Panc1 (cell line): ENCODE measurements at regions of chr5 and their contacts with region 1.

Region 1: DNA sequence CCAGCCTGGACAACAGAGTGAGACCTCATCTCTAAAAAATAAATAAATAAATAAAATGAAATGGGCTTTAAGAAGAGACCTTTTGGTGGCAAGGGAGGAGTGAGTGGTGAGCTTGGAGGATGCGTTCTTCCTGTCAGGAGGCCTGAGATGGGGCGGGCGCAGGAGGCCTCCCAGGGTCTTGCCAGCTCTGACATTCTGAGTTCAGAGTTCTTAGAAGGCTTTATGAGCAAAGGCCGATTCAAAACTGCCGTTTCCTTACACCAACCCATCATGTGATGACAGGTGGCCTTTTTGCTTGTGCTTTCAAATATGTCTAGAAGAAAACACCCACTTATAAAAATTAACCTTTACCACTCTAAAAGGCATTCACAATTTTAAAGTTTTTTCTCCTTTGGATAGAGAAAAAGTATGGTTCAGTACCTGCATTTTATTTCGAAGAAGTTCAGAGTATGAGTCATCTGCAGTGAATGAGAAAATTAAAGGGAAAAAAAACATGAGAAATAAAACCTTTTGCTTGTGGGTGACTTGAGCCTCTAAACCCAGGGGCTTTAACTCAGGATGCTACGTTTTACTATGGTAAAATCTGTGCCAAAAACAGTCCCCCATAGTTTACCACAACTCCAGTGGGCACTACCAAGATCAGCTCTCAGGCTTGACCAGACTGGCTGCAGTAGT is 157.4 kb upstream of the OTULINL start:
- DNase-seq: no peak
- ATAC-seq: no peak
- H3K4me3 ChIP-seq: no peak overlapping the region
- H3K27ac ChIP-seq: no peak overlapping the region
- H3K4me1 ChIP-seq: no peaks in the 10 kb centered on the region
- H3K27me3 ChIP-seq: no peaks in the 10 kb centered on the region
- CTCF ChIP-seq: no peak

Region 2: GRCh38 chr5:14357851-14358250 is 66.3 kb before region 1 on chr5:
- CTCF ChIA-PET with region 1: no interaction called
- POLR2A ChIA-PET with region 1: no interaction called
- in situ Hi-C with region 1: no loop called
- intact Hi-C with region 1: no loop called
- DNase-seq: no peak
- ATAC-seq: no peak
- H3K4me3 ChIP-seq: no peak overlapping the region
- H3K27ac ChIP-seq: no peak overlapping the region
- H3K4me1 ChIP-seq: peaks cover 4% of the 10 kb centered on the region; the same call in 1 of the 2 replicates
- H3K27me3 ChIP-seq: no peaks in the 10 kb centered on the region
- CTCF ChIP-seq: no peak

Region 3: GRCh38 chr5:14405267-14405666 is 18.9 kb before region 1 on chr5:
- CTCF ChIA-PET with region 1: no interaction called
- POLR2A ChIA-PET with region 1: interaction called, 15 read pairs
- in situ Hi-C with region 1: no loop called
- intact Hi-C with region 1: no loop called
- DNase-seq: no peak
- ATAC-seq: peak; percentile 50
- H3K4me3 ChIP-seq: no peak overlapping the region
- H3K27ac ChIP-seq: no peak overlapping the region
- H3K4me1 ChIP-seq: no peaks in the 10 kb centered on the region
- H3K27me3 ChIP-seq: no peaks in the 10 kb centered on the region
- CTCF ChIP-seq: peak; percentile 73; the same call in 1 of the 2 replicates

Region 4: GRCh38 chr5:16120579-16120978 is 1696.4 kb after region 1 on chr5:
- CTCF ChIA-PET with region 1: no interaction called
- POLR2A ChIA-PET with region 1: no interaction called
- in situ Hi-C with region 1: no loop called
- intact Hi-C with region 1: no loop called
- DNase-seq: no peak
- ATAC-seq: no peak
- H3K4me3 ChIP-seq: no peak overlapping the region
- H3K27ac ChIP-seq: no peak overlapping the region
- H3K4me1 ChIP-seq: no peaks in the 10 kb centered on the region
- H3K27me3 ChIP-seq: no peaks in the 10 kb centered on the region
- CTCF ChIP-seq: no peak